ENCODE measurements at regions of chr14 and their contacts with region 1.

Region 1: GRCh38 chr14:77660754-77661153 is 44.3 kb upstream of the SPTLC2 start:
- DNase-seq: no peak
- H3K4me3 Mint-ChIP-seq: no peak overlapping the region
- H3K27ac Mint-ChIP-seq: no peak overlapping the region
- H3K4me1 Mint-ChIP-seq: peaks cover 11% of the 10 kb centered on the region
- H3K27me3 Mint-ChIP-seq: no peaks in the 10 kb centered on the region
- CTCF ChIP-seq: no peak

Region 2: GRCh38 chr14:77508249-77508648 is 152.5 kb before region 1 on chr14:
- CTCF ChIA-PET with region 1: no interaction called
- POLR2A ChIA-PET with region 1: no interaction called
- intact Hi-C with region 1: no loop called
- DNase-seq: peak; percentile 78
- H3K4me3 Mint-ChIP-seq: no peak overlapping the region
- H3K27ac Mint-ChIP-seq: peak overlapping the region; percentile 57
- H3K4me1 Mint-ChIP-seq: peaks cover 19% of the 10 kb centered on the region
- H3K27me3 Mint-ChIP-seq: no peaks in the 10 kb centered on the region
- CTCF ChIP-seq: no peak

Region 3: GRCh38 chr14:77681196-77682157 is 20.7 kb after region 1 on chr14:
- CTCF ChIA-PET with region 1: interaction called, 11 read pairs
- POLR2A ChIA-PET with region 1: interaction called, 11 read pairs
- intact Hi-C with region 1: no loop called
- DNase-seq: peak; percentile 30
- H3K4me3 Mint-ChIP-seq: no peak overlapping the region
- H3K27ac Mint-ChIP-seq: peak overlapping the region; percentile 55
- H3K4me1 Mint-ChIP-seq: peaks cover 22% of the 10 kb centered on the region
- H3K27me3 Mint-ChIP-seq: no peaks in the 10 kb centered on the region
- CTCF ChIP-seq: no peak

Region 4: GRCh38 chr14:77799863-77800730 is 139.3 kb after region 1 on chr14 and contains the start of gene ADCK1:
- CTCF ChIA-PET with region 1: no interaction called
- POLR2A ChIA-PET with region 1: no interaction called
- intact Hi-C with region 1: loop called (anchors 10 kb)
- DNase-seq: peak; percentile 72
- H3K4me3 Mint-ChIP-seq: peak within 1 kb of the TSS; percentile 87
- H3K27ac Mint-ChIP-seq: peak within 1 kb of the TSS; percentile 61
- H3K4me1 Mint-ChIP-seq: peaks cover 18% of the 10 kb centered on the region
- H3K27me3 Mint-ChIP-seq: no peaks in the 10 kb centered on the region
- CTCF ChIP-seq: peak; percentile 39
- total RNA-seq, gene ADCK1: 7.0 and 7.8 TPM in 2 replicates

Region 5: GRCh38 chr14:77812028-77812427 is 151.3 kb after region 1 on chr14:
- CTCF ChIA-PET with region 1: no interaction called
- POLR2A ChIA-PET with region 1: no interaction called
- intact Hi-C with region 1: loop called (anchors 5 kb)
- DNase-seq: no peak
- H3K4me3 Mint-ChIP-seq: no peak overlapping the region
- H3K27ac Mint-ChIP-seq: no peak overlapping the region
- H3K4me1 Mint-ChIP-seq: no peaks in the 10 kb centered on the region
- H3K27me3 Mint-ChIP-seq: no peaks in the 10 kb centered on the region
- CTCF ChIP-seq: no peak

Region 6: GRCh38 chr14:78022059-78022458 is 361.3 kb after region 1 on chr14:
- CTCF ChIA-PET with region 1: interaction called, 3 read pairs
- POLR2A ChIA-PET with region 1: no interaction called
- intact Hi-C with region 1: loop called (anchors 5 kb)
- DNase-seq: peak; percentile 80
- H3K4me3 Mint-ChIP-seq: no peak overlapping the region
- H3K27ac Mint-ChIP-seq: no peak overlapping the region
- H3K4me1 Mint-ChIP-seq: no peaks in the 10 kb centered on the region
- H3K27me3 Mint-ChIP-seq: peaks cover 9% of the 10 kb centered on the region
- CTCF ChIP-seq: peak; percentile 73

Measured in MCF 10A (cell line).